ENCODE measurements at regions of chr5 and their contacts with region 1.

Region 1: GRCh38 chr5:168219515-168220410 is 71.7 kb upstream of the WWC1 start:
- DNase-seq: no peak
- H3K4me3 ChIP-seq: no peak overlapping the region
- H3K27ac ChIP-seq: no peak overlapping the region
- H3K4me1 ChIP-seq: peaks cover 0 to 8% (median 2%) of the 10 kb centered on the region in 6 donors
- H3K27me3 ChIP-seq: peaks cover 0 to 27% (median 0%) of the 10 kb centered on the region in 7 donors
- CTCF ChIP-seq: peak; percentile 71 to 88 (median 85)
- POLR2A ChIP-seq: no peak

Region 2: DNA sequence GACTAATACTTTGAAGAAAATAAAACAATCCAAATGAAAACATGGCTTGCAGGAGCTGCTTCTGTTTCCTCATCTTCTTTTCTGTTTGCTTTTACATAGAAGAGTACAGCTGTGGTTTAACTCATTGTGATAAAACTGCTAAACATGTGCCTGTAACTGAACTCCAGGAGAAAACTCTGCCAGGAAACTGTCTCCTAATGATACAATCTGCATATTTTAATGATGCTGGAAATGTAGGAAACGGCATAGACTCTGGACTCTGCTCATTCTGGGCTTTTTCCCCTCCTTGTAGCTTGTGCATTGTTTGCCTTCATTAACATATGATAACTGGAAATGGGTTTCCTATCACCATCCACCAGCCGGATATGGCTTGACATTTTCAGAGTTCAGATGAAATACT is 741.6 kb before region 1 on chr5:
- intact Hi-C with region 1: no loop called
- DNase-seq: no peak
- H3K4me3 ChIP-seq: no peak overlapping the region
- H3K27ac ChIP-seq: no peak overlapping the region
- H3K4me1 ChIP-seq: no peaks in the 10 kb centered on the region
- H3K27me3 ChIP-seq: no peaks in the 10 kb centered on the region
- CTCF ChIP-seq: no peak
- POLR2A ChIP-seq: no peak

Region 3: DNA sequence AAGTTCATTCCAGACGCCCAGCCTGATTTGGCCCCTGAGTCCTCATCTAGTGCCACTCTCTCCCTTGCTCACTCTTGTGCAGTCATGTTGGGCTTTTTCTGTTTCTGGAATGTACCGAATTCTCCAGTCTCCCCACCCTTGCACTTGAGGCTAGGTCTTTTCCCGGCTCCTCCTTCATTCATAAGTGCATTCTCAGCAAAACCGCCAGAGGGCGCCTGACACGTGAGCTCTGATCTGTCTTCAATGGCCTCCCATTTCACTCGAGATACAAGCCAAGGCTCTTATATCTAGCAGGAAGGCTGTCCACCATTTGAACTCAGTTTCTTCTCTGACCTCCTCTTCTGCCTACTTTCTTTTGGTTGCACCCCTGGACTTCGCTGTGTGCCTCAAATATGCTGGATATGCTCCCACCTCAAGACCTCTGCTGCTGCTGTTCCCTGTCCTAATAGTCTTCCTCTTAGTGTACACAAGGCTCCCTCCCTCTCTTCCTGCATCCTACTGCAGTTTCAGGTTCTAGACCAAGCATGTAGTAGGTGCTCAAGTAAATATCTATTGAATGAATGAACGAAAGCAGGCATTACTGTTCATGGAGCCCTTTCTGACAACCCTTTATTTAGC is 496.4 kb before region 1 on chr5:
- intact Hi-C with region 1: loop called (anchors 5 kb)
- DNase-seq: peak; percentile 81
- H3K4me3 ChIP-seq: no peak overlapping the region
- H3K27ac ChIP-seq: no peak overlapping the region
- H3K4me1 ChIP-seq: peaks cover 0 to 5% (median 0%) of the 10 kb centered on the region in 6 donors
- H3K27me3 ChIP-seq: peaks cover 0 to 11% (median 0%) of the 10 kb centered on the region in 7 donors
- CTCF ChIP-seq: peak; percentile 44 to 83 (median 75)
- POLR2A ChIP-seq: no peak

Measured in spleen (tissue), 13 donors.